Colonic mucosa (tissue), 4 donors: ENCODE measurements at regions of chr13 and their contacts with region 1.

Region 1: DNA sequence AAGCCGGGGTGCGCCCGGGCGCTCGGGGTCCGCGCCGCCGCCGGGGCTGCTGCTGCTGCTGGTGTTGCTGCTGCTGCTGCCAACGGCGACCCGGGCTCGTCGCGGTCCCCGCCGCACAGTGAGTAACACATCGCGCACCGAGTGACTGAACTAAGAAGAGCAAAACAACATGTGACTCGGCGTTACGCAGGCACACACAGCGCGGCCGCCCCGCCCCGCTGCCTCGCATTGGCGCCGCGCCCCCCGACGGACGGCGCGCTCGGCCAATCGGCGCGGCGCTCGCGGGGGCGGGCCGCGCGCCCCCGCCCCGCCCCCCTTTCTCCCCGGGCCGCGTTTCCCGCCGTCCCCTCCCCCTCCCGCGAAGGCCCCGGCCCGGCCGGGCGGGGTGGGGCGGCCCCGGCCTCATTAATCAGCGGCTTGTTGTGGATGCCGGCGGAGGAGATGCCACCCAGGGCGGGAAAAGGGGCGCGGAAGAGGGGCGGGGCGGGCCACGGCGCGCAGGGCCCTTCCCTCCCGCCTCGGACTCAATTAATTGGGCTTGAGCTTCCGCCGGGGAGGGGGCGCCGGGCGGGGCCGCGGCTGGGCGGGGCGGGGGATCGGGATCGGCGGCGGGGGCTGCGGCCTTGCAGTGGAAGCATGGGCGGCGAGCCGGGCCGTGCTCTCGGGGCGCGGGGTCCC is at the start of gene IRS2:
- DNase-seq: peak; percentile 93
- H3K4me3 ChIP-seq: peak within 1 kb of the TSS; percentile 85
- H3K27ac ChIP-seq: peak within 1 kb of the TSS; percentile 67
- H3K4me1 ChIP-seq: no peaks in the 10 kb centered on the region
- H3K27me3 ChIP-seq: no peaks in the 10 kb centered on the region
- CTCF ChIP-seq: no peak
- total RNA-seq, gene IRS2: 6.7 to 23.0 TPM

Region 2: GRCh38 chr13:108961542-108962125 is 825.0 kb before region 1 on chr13:
- intact Hi-C with region 1: loop called (anchors 5 kb)
- DNase-seq: no peak
- H3K4me3 ChIP-seq: no peak overlapping the region
- H3K27ac ChIP-seq: no peak overlapping the region
- H3K4me1 ChIP-seq: no peaks in the 10 kb centered on the region
- H3K27me3 ChIP-seq: no peaks in the 10 kb centered on the region
- CTCF ChIP-seq: peak; percentile 85

Region 3: DNA sequence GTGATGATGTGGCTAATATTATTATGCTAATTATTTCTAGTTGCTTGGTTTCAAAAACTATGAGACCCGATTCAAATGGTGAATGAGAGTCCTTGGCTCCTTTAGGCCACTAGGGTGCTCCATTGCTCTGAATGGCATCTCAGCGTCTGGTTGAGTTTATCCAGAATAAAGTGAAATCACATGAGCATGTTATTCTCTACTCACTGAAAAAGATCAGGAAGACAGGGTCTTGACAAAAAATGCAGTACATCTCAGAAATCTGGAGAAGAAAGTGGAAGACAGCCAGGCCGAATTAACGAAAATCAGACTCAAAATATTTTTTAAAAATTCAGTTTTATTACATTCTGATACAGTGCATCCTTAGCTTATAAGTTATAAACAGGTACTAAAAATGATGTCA is 641.0 kb before region 1 on chr13:
- intact Hi-C with region 1: loop called (anchors 5 kb)
- DNase-seq: peak; percentile 35
- H3K4me3 ChIP-seq: no peak overlapping the region
- H3K27ac ChIP-seq: no peak overlapping the region
- H3K4me1 ChIP-seq: no peaks in the 10 kb centered on the region
- H3K27me3 ChIP-seq: no peaks in the 10 kb centered on the region
- CTCF ChIP-seq: peak; percentile 54

Region 4: DNA sequence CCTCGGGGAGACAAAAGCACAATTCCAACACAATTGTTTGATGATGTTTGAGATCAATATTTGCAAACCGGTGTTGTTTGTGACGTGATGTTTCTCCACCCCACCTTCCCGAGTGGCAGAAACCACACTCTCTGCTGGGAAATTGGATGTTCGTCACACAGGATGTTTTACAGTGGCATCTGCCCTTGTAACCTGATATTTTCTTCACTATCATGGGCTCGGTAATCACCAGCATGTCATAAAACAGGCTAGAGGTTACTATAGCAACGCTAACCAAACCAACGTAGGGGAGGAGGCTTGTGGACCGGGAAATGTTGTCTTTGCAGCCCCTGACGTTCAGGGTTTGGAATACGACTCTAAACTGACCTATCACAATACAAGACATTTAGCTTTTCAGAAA is 454.7 kb before region 1 on chr13:
- intact Hi-C with region 1: loop called (anchors 10 kb)
- DNase-seq: no peak
- H3K4me3 ChIP-seq: no peak overlapping the region
- H3K27ac ChIP-seq: peak overlapping the region; percentile 29
- H3K4me1 ChIP-seq: no peaks in the 10 kb centered on the region
- H3K27me3 ChIP-seq: no peaks in the 10 kb centered on the region
- CTCF ChIP-seq: no peak

Region 5: DNA sequence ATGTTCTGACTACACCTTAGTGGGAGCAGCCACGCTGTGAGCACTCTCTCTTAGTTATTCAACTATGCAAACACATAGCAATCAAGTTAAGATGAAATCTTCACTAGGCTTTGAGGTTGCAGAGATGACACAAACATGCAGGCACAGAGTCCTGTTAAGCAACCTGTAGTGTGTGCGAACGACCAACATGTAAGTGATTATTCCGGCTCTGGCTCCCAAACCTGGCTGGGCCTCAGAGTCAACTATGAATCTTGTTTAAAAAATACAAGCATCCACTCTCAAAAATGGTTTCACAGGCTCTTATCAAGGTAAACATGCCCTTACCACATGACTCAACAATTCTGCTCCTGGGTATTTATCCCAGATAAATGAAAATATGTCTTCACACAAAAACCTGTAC is 91.6 kb before region 1 on chr13:
- intact Hi-C with region 1: no loop called
- DNase-seq: no peak
- H3K4me3 ChIP-seq: no peak overlapping the region
- H3K27ac ChIP-seq: no peak overlapping the region
- H3K4me1 ChIP-seq: no peaks in the 10 kb centered on the region
- H3K27me3 ChIP-seq: no peaks in the 10 kb centered on the region
- CTCF ChIP-seq: no peak